Caco-2 (cell line): ENCODE measurements at regions of chr4 and their contacts with region 1.

Region 1: GRCh38 chr4:139674875-139675550 is 9.4 kb downstream of the MGST2 start:
- DNase-seq: no peak
- H3K4me3 ChIP-seq: no peak overlapping the region
- H3K4me3 Mint-ChIP-seq: peak overlapping the region; percentile 15
- H3K27ac Mint-ChIP-seq: peak overlapping the region; percentile 74
- H3K4me1 ChIP-seq: peaks cover 77% of the 10 kb centered on the region
- H3K4me1 Mint-ChIP-seq: peaks cover 55% of the 10 kb centered on the region
- H3K27me3 ChIP-seq: no peaks in the 10 kb centered on the region
- H3K27me3 Mint-ChIP-seq: no peaks in the 10 kb centered on the region
- CTCF ChIP-seq: no peak

Region 2: GRCh38 chr4:138707746-138708677 is 967.0 kb before region 1 on chr4:
- CTCF ChIA-PET with region 1: no interaction called
- POLR2A ChIA-PET with region 1: no interaction called
- intact Hi-C with region 1: no loop called
- DNase-seq: no peak
- H3K4me3 ChIP-seq: no peak overlapping the region
- H3K4me3 Mint-ChIP-seq: no peak overlapping the region
- H3K27ac Mint-ChIP-seq: no peak overlapping the region
- H3K4me1 ChIP-seq: no peaks in the 10 kb centered on the region
- H3K4me1 Mint-ChIP-seq: no peaks in the 10 kb centered on the region
- H3K27me3 ChIP-seq: no peaks in the 10 kb centered on the region
- H3K27me3 Mint-ChIP-seq: no peaks in the 10 kb centered on the region
- CTCF ChIP-seq: no peak

Region 3: GRCh38 chr4:139441029-139441428 is 234.0 kb before region 1 on chr4:
- CTCF ChIA-PET with region 1: no interaction called
- POLR2A ChIA-PET with region 1: no interaction called
- intact Hi-C with region 1: no loop called
- DNase-seq: no peak
- H3K4me3 ChIP-seq: no peak overlapping the region
- H3K4me3 Mint-ChIP-seq: no peak overlapping the region
- H3K27ac Mint-ChIP-seq: no peak overlapping the region
- H3K4me1 ChIP-seq: no peaks in the 10 kb centered on the region
- H3K4me1 Mint-ChIP-seq: no peaks in the 10 kb centered on the region
- H3K27me3 ChIP-seq: no peaks in the 10 kb centered on the region
- H3K27me3 Mint-ChIP-seq: no peaks in the 10 kb centered on the region
- CTCF ChIP-seq: no peak

Region 4: DNA sequence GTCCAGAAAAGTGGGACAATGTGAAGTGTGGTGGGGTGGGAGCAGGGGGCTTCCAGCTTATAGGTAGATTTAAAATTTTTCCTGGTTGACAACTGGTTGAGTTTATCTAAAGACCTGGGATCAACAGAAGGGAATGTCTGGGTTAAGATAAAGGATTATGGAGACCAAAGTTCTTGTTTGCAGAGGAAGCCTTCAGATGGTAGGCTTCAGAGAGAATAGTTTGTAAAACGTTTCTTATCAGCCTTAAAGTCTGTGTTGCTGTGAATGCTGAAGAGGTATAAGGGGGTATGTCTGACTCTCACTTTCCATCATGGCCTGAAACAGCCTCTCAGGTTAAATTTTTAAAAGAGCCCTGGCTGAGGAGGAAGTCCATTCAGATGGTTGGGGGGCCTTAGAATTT is 11.1 kb after region 1 on chr4:
- CTCF ChIA-PET with region 1: interaction called, 8 read pairs
- POLR2A ChIA-PET with region 1: no interaction called
- intact Hi-C with region 1: loop called (anchors 1 kb)
- DNase-seq: peak in 1 of 2 experiments; percentile 53
- H3K4me3 ChIP-seq: no peak overlapping the region
- H3K4me3 Mint-ChIP-seq: peak overlapping the region; percentile 50
- H3K27ac Mint-ChIP-seq: peak overlapping the region; percentile 81
- H3K4me1 ChIP-seq: peaks cover 73% of the 10 kb centered on the region
- H3K4me1 Mint-ChIP-seq: peaks cover 65% of the 10 kb centered on the region
- H3K27me3 ChIP-seq: no peaks in the 10 kb centered on the region
- H3K27me3 Mint-ChIP-seq: no peaks in the 10 kb centered on the region
- CTCF ChIP-seq: no peak

Region 5: DNA sequence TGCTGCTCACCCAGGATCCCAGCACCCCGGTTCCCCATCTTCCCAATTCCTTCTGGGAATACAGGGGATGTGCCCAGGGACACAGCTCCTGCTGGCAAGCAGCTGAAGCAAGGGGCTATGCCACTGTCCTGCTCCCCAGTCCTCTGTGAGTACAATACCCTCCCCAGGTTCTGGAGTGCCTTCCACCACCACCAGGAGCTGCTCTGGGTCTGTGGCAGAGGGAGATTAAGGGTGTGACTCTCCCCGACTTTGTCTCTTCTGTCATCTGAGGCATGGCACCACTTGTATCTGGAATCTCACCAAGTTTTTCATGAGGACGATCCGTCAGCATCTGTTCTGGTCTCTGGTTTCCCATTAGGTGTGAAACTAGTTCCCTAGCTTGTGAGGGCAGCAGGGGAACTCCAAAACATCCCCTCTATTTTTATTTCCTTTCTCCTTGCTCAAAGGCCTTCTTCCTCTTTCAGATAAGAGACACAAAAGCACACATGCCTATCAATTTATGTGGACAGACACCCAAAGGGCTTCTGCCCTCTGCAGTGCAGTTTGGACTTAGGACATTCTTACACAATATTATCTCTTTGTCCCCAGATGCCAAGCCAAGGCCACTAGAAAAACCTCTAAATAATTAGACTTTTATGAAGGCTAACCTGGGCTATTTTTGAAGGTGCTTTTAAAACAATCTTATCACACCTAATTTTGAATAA is 17.4 kb after region 1 on chr4:
- CTCF ChIA-PET with region 1: interaction called, 8 read pairs
- POLR2A ChIA-PET with region 1: no interaction called
- intact Hi-C with region 1: loop called (anchors 2 kb)
- DNase-seq: peak; percentile 60 to 64
- H3K4me3 ChIP-seq: no peak overlapping the region
- H3K4me3 Mint-ChIP-seq: peak overlapping the region; percentile 60
- H3K27ac Mint-ChIP-seq: peak overlapping the region; percentile 93
- H3K4me1 ChIP-seq: peaks cover 87% of the 10 kb centered on the region
- H3K4me1 Mint-ChIP-seq: peaks cover 40% of the 10 kb centered on the region
- H3K27me3 ChIP-seq: no peaks in the 10 kb centered on the region
- H3K27me3 Mint-ChIP-seq: no peaks in the 10 kb centered on the region
- CTCF ChIP-seq: peak; percentile 46 to 48